ENCODE measurements at regions of chr1 and their contacts with region 1.

Region 1: GRCh38 chr1:223712194-223712849 is at the start of gene CAPN2:
- DNase-seq: peak; percentile 68
- H3K4me3 Mint-ChIP-seq: peak within 1 kb of the TSS; percentile 76
- H3K27ac Mint-ChIP-seq: peak within 1 kb of the TSS; percentile 82
- H3K4me1 Mint-ChIP-seq: peaks cover 67% of the 10 kb centered on the region
- H3K27me3 Mint-ChIP-seq: peaks cover 19% of the 10 kb centered on the region

Region 2: DNA sequence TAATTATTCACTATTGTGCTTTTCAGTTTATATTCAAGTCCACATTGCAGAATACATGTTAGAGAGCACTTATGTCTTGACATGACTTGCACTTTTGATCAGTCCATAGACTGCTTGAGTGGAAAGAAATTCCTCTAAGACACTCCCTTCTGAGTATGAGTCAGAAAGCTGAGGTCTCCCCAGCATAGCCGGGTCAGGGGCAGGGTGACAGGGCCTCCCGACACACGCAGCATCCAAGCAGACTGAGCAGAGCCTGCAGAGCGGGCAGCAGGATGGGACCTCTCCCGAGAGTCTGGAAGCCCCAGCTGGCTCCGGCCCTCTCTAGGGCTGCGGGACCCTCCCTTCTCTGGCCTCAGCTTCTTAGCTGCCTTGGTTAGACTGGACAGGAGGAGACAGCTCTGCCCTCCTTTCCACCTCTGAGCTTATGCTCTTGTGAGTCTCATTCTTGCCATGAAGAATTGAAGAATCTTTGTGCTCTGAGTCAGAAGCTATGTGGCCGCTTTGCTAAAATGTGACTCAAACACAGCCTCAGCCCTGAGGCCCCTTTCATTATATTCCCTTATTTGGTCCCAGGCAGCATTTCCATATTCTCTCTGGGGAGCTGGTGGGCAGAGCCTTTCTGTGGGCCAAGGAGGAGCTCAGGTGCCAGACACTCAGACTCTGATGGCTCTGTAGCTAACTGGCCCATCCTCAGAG is 11.2 kb before region 1 on chr1:
- CTCF ChIA-PET with region 1: interaction called, 10 read pairs
- DNase-seq: no peak
- H3K4me3 Mint-ChIP-seq: no peak overlapping the region
- H3K27ac Mint-ChIP-seq: no peak overlapping the region
- H3K4me1 Mint-ChIP-seq: peaks cover 10% of the 10 kb centered on the region
- H3K27me3 Mint-ChIP-seq: peaks cover 13% of the 10 kb centered on the region